Panc1 (cell line): ENCODE measurements at regions of chr2 and their contacts with region 1.

Region 1: GRCh38 chr2:172806493-172806892 is 70.8 kb downstream of the RAPGEF4 start:
- DNase-seq: peak; percentile 28
- ATAC-seq: peak; percentile 73
- H3K4me3 ChIP-seq: no peak overlapping the region
- H3K27ac ChIP-seq: no peak overlapping the region
- H3K4me1 ChIP-seq: peaks cover 6% of the 10 kb centered on the region; the same call in 1 of the 2 replicates
- H3K27me3 ChIP-seq: no peaks in the 10 kb centered on the region
- CTCF ChIP-seq: peak; percentile 83

Region 2: DNA sequence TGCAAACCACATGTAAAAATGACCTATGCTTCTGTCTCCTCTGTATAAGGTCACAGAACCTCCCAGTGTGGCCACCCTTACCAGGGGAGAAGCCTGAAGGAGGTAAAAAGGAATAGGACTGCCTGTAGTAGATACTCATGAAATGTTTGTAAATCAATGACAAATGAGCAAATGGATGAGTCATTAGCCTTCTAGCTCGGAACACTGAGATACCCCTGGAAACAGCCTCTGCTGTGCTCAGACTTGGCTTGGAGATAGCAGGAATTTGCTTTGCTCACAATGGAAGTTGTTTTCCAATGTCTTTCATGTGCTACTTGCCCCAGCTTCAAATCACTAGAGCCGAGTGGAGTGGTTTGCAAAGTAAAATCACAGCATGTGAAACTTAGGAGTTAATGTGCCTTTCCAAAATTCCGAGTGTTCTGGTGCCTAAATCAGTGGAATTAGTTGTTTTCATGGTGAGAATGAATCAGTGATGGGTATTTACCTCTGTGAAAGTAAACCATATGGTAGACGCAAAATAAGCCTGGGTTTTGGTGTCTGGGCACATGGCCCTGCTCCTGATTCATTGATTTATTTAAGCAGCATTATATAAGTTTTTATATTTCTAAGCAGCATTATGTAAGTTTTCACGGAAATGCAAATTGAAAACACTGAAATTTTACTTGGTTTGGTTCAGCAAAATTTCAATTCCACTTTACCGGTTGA is 115.2 kb after region 1 on chr2:
- CTCF ChIA-PET with region 1: no interaction called
- POLR2A ChIA-PET with region 1: no interaction called
- in situ Hi-C with region 1: loop called (anchors 25 kb)
- intact Hi-C with region 1: no loop called
- DNase-seq: no peak
- ATAC-seq: no peak
- H3K4me3 ChIP-seq: no peak overlapping the region
- H3K27ac ChIP-seq: no peak overlapping the region
- H3K4me1 ChIP-seq: no peaks in the 10 kb centered on the region
- H3K27me3 ChIP-seq: peaks cover 2% of the 10 kb centered on the region; the same call in 1 of the 2 replicates
- CTCF ChIP-seq: no peak

Region 3: GRCh38 chr2:172931918-172932520 is 125.5 kb after region 1 on chr2:
- CTCF ChIA-PET with region 1: interaction called, 6 read pairs
- POLR2A ChIA-PET with region 1: interaction called, 5 read pairs
- in situ Hi-C with region 1: no loop called
- intact Hi-C with region 1: loop called (anchors 1 kb)
- DNase-seq: peak; percentile 20
- ATAC-seq: peak; percentile 78
- H3K4me3 ChIP-seq: no peak overlapping the region
- H3K27ac ChIP-seq: no peak overlapping the region
- H3K4me1 ChIP-seq: peaks cover 4% of the 10 kb centered on the region; the same call in 1 of the 2 replicates
- H3K27me3 ChIP-seq: no peaks in the 10 kb centered on the region; the same call in 1 of the 2 replicates
- CTCF ChIP-seq: peak; percentile 86

Region 4: GRCh38 chr2:173021939-173022371 is 215.5 kb after region 1 on chr2:
- CTCF ChIA-PET with region 1: no interaction called
- POLR2A ChIA-PET with region 1: no interaction called
- in situ Hi-C with region 1: no loop called
- intact Hi-C with region 1: loop called (anchors 5 kb)
- DNase-seq: no peak
- ATAC-seq: peak; percentile 71
- H3K4me3 ChIP-seq: no peak overlapping the region
- H3K27ac ChIP-seq: peak overlapping the region; percentile 72; the same call in 1 of the 2 replicates
- H3K4me1 ChIP-seq: peaks cover 17% of the 10 kb centered on the region
- H3K27me3 ChIP-seq: no peaks in the 10 kb centered on the region
- CTCF ChIP-seq: peak; percentile 69